ENCODE measurements at regions of chr6 and their contacts with region 1.

Region 1: DNA sequence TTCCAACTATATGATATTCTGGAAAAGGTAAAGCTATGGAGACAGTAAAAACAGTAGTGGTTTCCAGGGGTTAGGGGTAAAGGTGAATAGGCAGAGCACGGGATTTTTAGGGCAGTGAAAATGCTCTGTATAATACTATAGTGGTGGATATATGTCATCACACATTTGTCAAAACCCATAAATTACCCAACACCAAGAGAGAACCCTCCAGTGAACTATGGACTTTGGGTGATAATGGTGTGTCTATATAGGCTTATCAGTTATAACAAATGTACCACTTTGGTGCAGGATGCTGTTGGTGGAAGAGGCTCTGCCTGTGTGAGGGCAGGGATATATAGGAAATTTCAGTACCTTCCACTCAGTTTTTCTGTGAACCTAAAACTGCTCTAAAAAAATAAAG is 149.9 kb downstream of the GPX5 start:
- DNase-seq: no peak
- ATAC-seq: no peak

Region 2: GRCh38 chr6:28232785-28233184 is 442.8 kb before region 1 on chr6:
- intact Hi-C with region 1: loop called (anchors 5 kb)
- DNase-seq: no peak
- ATAC-seq: no peak

Region 3: DNA sequence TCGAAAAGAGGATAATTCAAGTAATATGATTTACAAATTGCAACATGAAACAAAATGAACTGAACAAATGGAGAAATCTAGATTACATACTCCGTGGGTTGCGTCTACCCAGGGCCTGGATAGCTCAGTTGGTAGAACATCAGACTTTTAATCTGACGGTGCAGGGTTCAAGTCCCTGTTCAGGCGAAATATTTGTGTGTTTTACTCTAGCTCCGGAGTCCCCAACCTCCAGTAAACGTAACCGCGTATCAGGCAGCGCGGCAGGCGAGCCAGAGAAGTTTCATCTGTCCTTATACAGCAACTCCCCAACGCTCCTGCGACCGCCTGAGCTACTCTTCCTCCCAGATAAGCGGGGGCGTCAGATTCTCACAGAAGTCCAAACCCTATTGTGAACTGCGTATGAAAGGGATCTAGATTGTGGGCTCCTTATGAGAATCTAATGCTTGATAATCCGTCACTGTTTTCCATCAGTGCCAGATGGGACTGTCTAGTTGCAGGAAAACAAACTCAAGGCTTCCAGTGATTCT is 72.1 kb after region 1 on chr6:
- intact Hi-C with region 1: no loop called
- DNase-seq: no peak
- ATAC-seq: no peak

Measured in sciatic nerve (tissue), 2 donors.